Activated CD4-positive, alpha-beta memory T cell treated with anti-CD3 and anti-CD28 coated beads, Interleukin-2, amount 10 ng/mL, durations not matched to agents 7 days and 5 days (primary cell): ENCODE measurements at regions of chr16 and their contacts with region 1.

Region 1: DNA sequence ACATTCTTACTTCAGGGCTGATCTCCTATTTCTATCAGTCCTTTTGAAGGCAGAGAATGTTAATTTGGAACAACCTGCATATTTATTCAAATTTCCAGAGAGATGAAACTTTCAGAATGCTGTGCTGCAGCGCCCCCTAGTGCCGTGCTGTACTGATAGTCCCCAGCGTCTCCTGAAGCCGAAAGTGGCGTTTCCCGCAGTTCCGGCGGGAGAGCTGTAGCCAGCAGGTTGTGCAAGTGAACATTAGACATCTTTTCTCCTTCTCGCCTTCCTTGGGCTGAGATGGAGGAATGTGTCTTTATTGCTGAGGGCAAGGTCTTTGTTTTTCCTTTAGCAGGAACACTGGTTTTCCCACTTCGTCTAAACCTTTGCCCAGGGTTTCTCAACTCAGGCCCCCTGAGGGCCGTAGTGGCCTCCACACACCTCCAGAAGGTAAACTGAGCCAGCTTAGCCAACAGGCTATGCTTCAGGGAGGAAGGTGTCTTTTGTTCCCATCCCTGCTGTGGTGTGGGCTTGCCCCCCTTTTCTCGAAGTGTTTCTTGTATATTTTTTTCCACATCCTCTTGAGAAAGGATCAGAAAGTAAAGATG is 26.4 kb downstream of the USP10 start:
- DNase-seq: peak; percentile 84
- H3K4me3 Mint-ChIP-seq: no peak overlapping the region
- H3K27ac Mint-ChIP-seq: no peak overlapping the region
- H3K4me1 Mint-ChIP-seq: peaks cover 62% of the 10 kb centered on the region
- H3K27me3 Mint-ChIP-seq: no peaks in the 10 kb centered on the region

Region 2: GRCh38 chr16:84617791-84618580 is 108.2 kb before region 1 on chr16 and contains the start of gene COTL1:
- CTCF ChIA-PET with region 1: interaction called, 28 read pairs
- POLR2A ChIA-PET with region 1: interaction called, 3 read pairs
- DNase-seq: peak; percentile 95
- H3K4me3 Mint-ChIP-seq: peak within 1 kb of the TSS; percentile 97
- H3K27ac Mint-ChIP-seq: peak within 1 kb of the TSS; percentile 76
- H3K4me1 Mint-ChIP-seq: peaks cover 57% of the 10 kb centered on the region
- H3K27me3 Mint-ChIP-seq: peaks cover 16% of the 10 kb centered on the region
- total RNA-seq, gene COTL1: 676 to 689 TPM

Region 3: GRCh38 chr16:84672276-84673202 is 53.6 kb before region 1 on chr16:
- CTCF ChIA-PET with region 1: interaction called, 74 read pairs
- POLR2A ChIA-PET with region 1: no interaction called
- DNase-seq: peak; percentile 81
- H3K4me3 Mint-ChIP-seq: no peak overlapping the region
- H3K27ac Mint-ChIP-seq: no peak overlapping the region
- H3K4me1 Mint-ChIP-seq: peaks cover 9% of the 10 kb centered on the region
- H3K27me3 Mint-ChIP-seq: peaks cover 10% of the 10 kb centered on the region

Region 4: GRCh38 chr16:84714028-84714427 is 12.1 kb before region 1 on chr16:
- CTCF ChIA-PET with region 1: interaction called, 23 read pairs
- POLR2A ChIA-PET with region 1: interaction called, 3 read pairs
- DNase-seq: no peak
- H3K4me3 Mint-ChIP-seq: no peak overlapping the region
- H3K27ac Mint-ChIP-seq: no peak overlapping the region
- H3K4me1 Mint-ChIP-seq: peaks cover 34% of the 10 kb centered on the region
- H3K27me3 Mint-ChIP-seq: no peaks in the 10 kb centered on the region

Region 5: GRCh38 chr16:84754353-84754856 is 28.2 kb after region 1 on chr16:
- CTCF ChIA-PET with region 1: interaction called, 11 read pairs
- POLR2A ChIA-PET with region 1: no interaction called
- DNase-seq: peak; percentile 75
- H3K4me3 Mint-ChIP-seq: peak overlapping the region; percentile 58
- H3K27ac Mint-ChIP-seq: peak overlapping the region; percentile 53
- H3K4me1 Mint-ChIP-seq: peaks cover 83% of the 10 kb centered on the region
- H3K27me3 Mint-ChIP-seq: no peaks in the 10 kb centered on the region

Region 6: DNA sequence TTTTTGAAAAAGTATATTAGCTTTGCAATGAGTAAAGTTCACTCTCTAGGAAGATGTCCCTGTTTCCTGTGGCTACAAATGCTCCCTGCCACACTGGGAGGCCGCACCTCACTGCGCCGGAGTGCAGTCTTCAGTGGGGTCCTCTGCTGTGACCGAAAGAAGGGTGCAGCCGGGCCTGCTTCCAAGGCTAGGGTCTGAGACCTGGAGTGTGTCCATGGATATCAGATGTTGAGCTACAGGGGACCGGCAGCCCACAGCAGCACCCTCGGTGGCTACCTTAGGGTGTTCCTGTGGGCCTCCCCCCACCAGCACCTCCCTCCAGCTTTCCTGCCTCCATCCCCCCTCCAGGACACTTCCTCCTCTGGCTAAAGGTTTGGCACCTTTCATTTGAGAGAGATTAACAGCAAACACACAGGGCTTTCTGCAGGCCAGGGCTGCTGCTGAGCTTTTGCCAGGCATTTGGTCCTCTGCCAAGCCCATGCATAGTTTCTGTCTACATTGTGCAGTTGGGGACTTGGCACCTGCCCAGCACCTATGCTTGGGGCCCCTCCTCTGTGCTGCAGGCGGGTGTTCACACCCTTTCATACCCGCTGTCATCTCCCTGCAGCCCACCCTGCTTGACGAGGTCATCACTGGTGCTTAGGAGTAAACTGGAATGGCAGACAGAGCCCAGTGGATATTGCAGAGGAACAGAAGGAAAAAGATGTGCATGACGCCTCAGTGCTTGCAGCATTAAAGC is 59.8 kb after region 1 on chr16:
- CTCF ChIA-PET with region 1: no interaction called
- POLR2A ChIA-PET with region 1: no interaction called
- DNase-seq: no peak
- H3K4me3 Mint-ChIP-seq: no peak overlapping the region
- H3K27ac Mint-ChIP-seq: no peak overlapping the region
- H3K4me1 Mint-ChIP-seq: no peaks in the 10 kb centered on the region
- H3K27me3 Mint-ChIP-seq: no peaks in the 10 kb centered on the region